Dendritic cell treated with granulocyte-macrophage colony-stimulating factor and Interleukin-4, amounts not matched to agents 40 ng/mL and 50 ng/mL, for 4 days (primary cell): ENCODE measurements at regions of chr21 and their contacts with region 1.

Region 1: GRCh38 chr21:38289705-38290485 is 33.1 kb downstream of the KCNJ15 start:
- H3K4me3 Mint-ChIP-seq: peak overlapping the region; percentile 39
- H3K27ac Mint-ChIP-seq: peak overlapping the region; percentile 79
- H3K4me1 Mint-ChIP-seq: peaks cover 66% of the 10 kb centered on the region
- H3K27me3 Mint-ChIP-seq: no peaks in the 10 kb centered on the region

Region 2: DNA sequence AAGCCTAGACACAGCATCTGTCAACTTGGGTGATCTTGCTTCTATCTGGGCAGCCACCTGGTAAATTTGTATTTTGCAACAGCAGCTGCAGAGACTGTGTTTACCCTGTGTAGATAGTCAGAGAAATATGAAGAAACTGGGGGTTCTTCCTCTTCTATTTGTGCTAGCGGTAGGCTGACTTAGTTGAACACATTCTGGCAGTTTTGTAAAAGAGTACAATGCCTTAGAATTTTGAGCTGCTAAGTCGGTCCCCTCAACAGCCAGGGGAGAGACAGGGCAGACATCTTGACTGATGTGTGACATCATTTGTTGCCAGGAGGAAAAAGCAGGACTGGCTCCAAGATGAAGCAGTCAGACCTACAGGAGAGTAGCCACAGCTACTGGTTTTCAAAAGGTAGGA is 427.4 kb before region 1 on chr21:
- intact Hi-C with region 1: loop called (anchors 10 kb)
- H3K4me3 Mint-ChIP-seq: no peak overlapping the region
- H3K27ac Mint-ChIP-seq: peak overlapping the region; percentile 15
- H3K4me1 Mint-ChIP-seq: peaks cover 37% of the 10 kb centered on the region
- H3K27me3 Mint-ChIP-seq: no peaks in the 10 kb centered on the region

Region 3: DNA sequence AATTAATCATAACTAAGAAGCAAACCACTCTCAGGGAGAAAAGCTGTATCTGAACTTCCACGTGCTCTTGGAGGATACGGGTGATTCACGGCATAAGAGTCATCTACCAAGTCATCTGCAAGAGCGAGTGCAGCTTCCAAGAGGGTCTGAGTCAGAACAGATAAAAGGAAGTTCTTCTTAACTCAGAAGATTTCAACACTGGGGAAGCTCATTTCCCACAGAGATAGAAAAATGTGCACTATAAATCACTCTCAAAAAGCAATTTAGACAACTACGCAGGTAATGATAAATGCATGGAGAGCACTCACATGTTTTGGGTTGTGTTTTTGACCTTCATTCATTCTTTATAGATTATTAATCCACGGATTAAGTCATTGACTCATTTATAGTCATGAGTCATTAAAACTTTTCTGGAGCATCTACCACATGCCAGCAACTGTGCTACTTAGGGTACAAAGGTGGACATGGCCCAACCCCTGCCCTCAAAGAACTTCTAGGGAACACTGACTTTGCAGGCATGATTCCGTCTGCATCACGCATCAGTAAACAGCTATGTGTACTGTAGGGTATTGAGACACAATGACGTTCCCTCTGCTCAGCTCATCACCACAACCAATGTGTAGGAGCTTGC is 12.3 kb before region 1 on chr21:
- intact Hi-C with region 1: loop called (anchors 2 kb)
- H3K4me3 Mint-ChIP-seq: no peak overlapping the region
- H3K27ac Mint-ChIP-seq: peak overlapping the region; percentile 70
- H3K4me1 Mint-ChIP-seq: peaks cover 61% of the 10 kb centered on the region
- H3K27me3 Mint-ChIP-seq: no peaks in the 10 kb centered on the region